Activated naive CD4-positive, alpha-beta T cell treated with anti-CD3 and anti-CD28 coated beads for 36 hours (primary cell): ENCODE measurements at regions of chr2 and their contacts with region 1.

Region 1: GRCh38 chr2:12716282-12717190 is at the start of gene TRIB2:
- DNase-seq: peak; percentile 84
- H3K4me3 Mint-ChIP-seq: peak within 1 kb of the TSS; percentile 96
- H3K27ac Mint-ChIP-seq: peak within 1 kb of the TSS; percentile 76
- H3K4me1 Mint-ChIP-seq: peaks cover 46% of the 10 kb centered on the region
- H3K27me3 Mint-ChIP-seq: peaks cover 1% of the 10 kb centered on the region
- total RNA-seq, gene TRIB2: 3.7 to 4.4 TPM

Region 2: DNA sequence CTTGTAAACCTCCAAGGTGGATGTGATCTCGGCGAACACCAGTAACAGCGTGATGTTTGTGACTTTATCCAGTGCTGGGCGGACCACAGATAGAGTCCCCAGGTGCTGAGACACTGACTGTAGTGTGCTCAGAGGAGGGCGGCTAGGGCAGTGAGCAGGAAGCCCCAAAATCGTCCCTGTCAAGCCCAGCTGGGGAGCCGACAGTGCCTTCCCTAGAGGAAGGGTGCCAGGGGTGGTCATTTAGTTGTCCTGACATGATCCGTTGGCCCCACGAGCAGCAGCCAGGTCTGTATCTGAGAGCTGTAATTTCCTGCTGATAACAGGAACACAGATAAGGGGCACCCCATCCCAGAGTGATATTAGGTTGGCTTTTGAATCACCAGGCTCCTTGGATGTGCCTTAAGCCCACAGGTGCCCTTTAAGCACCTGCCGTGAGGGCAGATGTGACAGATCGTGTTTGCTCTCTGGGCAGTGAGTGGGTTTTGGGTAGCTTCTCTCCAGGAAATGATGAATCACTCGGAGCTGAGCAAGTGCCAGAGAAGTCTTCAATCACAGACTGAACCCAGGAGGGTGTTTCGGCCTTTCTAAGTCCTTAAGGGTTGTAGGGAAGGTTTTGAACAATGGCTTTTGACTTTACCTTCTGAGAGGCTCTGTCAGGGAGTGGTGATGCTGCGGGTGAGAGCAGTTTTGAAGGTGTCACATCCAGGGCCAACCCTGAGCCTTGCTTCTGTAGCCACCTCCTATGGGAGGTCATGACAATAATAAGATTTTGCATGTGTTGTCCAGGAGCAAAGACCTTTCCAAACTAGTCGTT is 962.4 kb before region 1 on chr2:
- CTCF ChIA-PET with region 1: interaction called, 3 read pairs
- intact Hi-C with region 1: loop called (anchors 5 kb)
- DNase-seq: peak; percentile 88
- H3K4me3 Mint-ChIP-seq: peak overlapping the region; percentile 70
- H3K27ac Mint-ChIP-seq: peak overlapping the region; percentile 97
- H3K4me1 Mint-ChIP-seq: peaks cover 94% of the 10 kb centered on the region
- H3K27me3 Mint-ChIP-seq: no peaks in the 10 kb centered on the region

Region 3: GRCh38 chr2:12106440-12107080 is 610.0 kb before region 1 on chr2:
- CTCF ChIA-PET with region 1: no interaction called
- intact Hi-C with region 1: loop called (anchors 5 kb)
- DNase-seq: peak; percentile 82
- H3K4me3 Mint-ChIP-seq: no peak overlapping the region
- H3K27ac Mint-ChIP-seq: no peak overlapping the region
- H3K4me1 Mint-ChIP-seq: peaks cover 37% of the 10 kb centered on the region
- H3K27me3 Mint-ChIP-seq: no peaks in the 10 kb centered on the region

Region 4: DNA sequence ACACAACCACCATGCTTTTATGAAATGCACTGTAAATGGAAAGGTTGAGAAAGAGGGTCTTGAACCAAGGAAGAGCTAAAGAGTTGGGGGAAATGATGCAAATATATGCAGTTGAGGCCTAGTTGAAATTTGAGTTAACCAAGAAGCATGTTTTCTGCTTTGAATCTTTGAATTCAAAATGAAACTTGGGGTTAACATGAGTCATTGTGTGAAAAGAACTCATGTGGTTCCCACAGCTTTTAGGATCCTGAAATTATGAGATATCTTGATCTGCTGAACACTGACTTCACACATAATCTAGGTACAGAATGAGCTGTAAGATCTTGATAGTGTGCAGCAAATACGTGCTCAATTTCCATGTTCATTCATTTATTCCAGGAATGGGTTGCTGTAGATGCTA is 422.7 kb before region 1 on chr2:
- CTCF ChIA-PET with region 1: interaction called, 6 read pairs
- intact Hi-C with region 1: loop called (anchors 2 kb)
- DNase-seq: peak; percentile 18
- H3K4me3 Mint-ChIP-seq: no peak overlapping the region
- H3K27ac Mint-ChIP-seq: peak overlapping the region; percentile 75
- H3K4me1 Mint-ChIP-seq: peaks cover 55% of the 10 kb centered on the region
- H3K27me3 Mint-ChIP-seq: peaks cover 6% of the 10 kb centered on the region

Region 5: GRCh38 chr2:12501469-12502158 is 214.9 kb before region 1 on chr2:
- CTCF ChIA-PET with region 1: interaction called, 3 read pairs
- intact Hi-C with region 1: loop called (anchors 2 kb)
- DNase-seq: peak; percentile 88
- H3K4me3 Mint-ChIP-seq: no peak overlapping the region
- H3K27ac Mint-ChIP-seq: peak overlapping the region; percentile 47
- H3K4me1 Mint-ChIP-seq: peaks cover 91% of the 10 kb centered on the region
- H3K27me3 Mint-ChIP-seq: no peaks in the 10 kb centered on the region

Region 6: GRCh38 chr2:12652723-12653122 is 63.8 kb before region 1 on chr2:
- CTCF ChIA-PET with region 1: no interaction called
- intact Hi-C with region 1: no loop called
- DNase-seq: no peak
- H3K4me3 Mint-ChIP-seq: no peak overlapping the region
- H3K27ac Mint-ChIP-seq: no peak overlapping the region
- H3K4me1 Mint-ChIP-seq: peaks cover 6% of the 10 kb centered on the region
- H3K27me3 Mint-ChIP-seq: no peaks in the 10 kb centered on the region

Region 7: GRCh38 chr2:12728221-12728777 is 11.8 kb after region 1 on chr2:
- CTCF ChIA-PET with region 1: interaction called, 33 read pairs
- intact Hi-C with region 1: loop called (anchors 1 kb)
- DNase-seq: peak; percentile 78
- H3K4me3 Mint-ChIP-seq: peak overlapping the region; percentile 56
- H3K27ac Mint-ChIP-seq: peak overlapping the region; percentile 48
- H3K4me1 Mint-ChIP-seq: peaks cover 79% of the 10 kb centered on the region
- H3K27me3 Mint-ChIP-seq: no peaks in the 10 kb centered on the region